ENCODE measurements at regions of chr13 and their contacts with region 1.

Region 1: GRCh38 chr13:25114220-25114619 is 18.3 kb downstream of the PABPC3 start:
- DNase-seq: peak; percentile 77
- H3K4me3 Mint-ChIP-seq: no peak overlapping the region
- H3K27ac Mint-ChIP-seq: no peak overlapping the region
- H3K4me1 Mint-ChIP-seq: peaks cover 6% of the 10 kb centered on the region
- H3K27me3 Mint-ChIP-seq: no peaks in the 10 kb centered on the region
- CTCF ChIP-seq: peak; percentile 71

Region 2: GRCh38 chr13:25001476-25002206 is 112.6 kb before region 1 on chr13:
- CTCF ChIA-PET with region 1: interaction called, 42 read pairs
- POLR2A ChIA-PET with region 1: no interaction called
- intact Hi-C with region 1: loop called (anchors 1 kb)
- DNase-seq: peak; percentile 53
- H3K4me3 Mint-ChIP-seq: no peak overlapping the region
- H3K27ac Mint-ChIP-seq: peak overlapping the region; percentile 66
- H3K4me1 Mint-ChIP-seq: peaks cover 19% of the 10 kb centered on the region
- H3K27me3 Mint-ChIP-seq: no peaks in the 10 kb centered on the region
- CTCF ChIP-seq: no peak

Region 3: DNA sequence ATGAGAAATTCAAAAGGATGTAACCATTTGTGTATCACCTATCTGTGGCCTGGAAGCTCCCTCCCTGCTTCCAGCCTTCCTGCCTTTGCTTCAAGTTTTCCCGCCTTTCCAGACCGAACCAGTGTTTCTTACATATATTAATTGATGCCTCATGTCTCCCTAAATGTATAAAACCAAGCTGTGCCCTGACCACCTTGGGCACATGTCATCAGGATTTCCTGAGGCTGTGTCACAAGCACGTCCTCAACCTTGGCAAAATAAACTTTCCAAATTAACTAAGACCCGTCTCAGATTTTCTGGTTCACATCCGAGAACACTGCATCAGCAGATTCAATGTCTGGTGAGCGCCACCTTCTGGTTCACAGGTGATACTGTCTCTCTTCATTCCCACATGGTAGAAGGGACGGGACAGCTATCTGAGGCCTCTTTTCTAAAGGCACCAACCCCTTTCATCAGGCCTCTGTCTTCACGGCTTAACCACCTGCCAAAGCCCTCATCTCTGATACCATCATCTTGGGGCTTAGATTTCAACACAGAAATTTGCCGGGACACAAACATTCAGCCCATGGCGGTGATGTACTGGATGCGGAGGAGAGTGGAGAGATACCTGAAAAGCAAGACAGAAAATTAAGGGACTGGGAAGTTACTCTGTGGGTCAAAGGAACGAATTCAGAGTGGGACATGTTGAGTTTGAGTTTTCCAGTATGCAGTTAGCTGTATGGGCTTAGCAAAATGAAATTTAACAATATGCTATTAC is 77.0 kb before region 1 on chr13:
- CTCF ChIA-PET with region 1: interaction called, 9 read pairs
- POLR2A ChIA-PET with region 1: no interaction called
- intact Hi-C with region 1: loop called (anchors 1 kb)
- DNase-seq: peak; percentile 79
- H3K4me3 Mint-ChIP-seq: no peak overlapping the region
- H3K27ac Mint-ChIP-seq: peak overlapping the region; percentile 16
- H3K4me1 Mint-ChIP-seq: peaks cover 5% of the 10 kb centered on the region
- H3K27me3 Mint-ChIP-seq: peaks cover 32% of the 10 kb centered on the region
- CTCF ChIP-seq: peak; percentile 72

Region 4: GRCh38 chr13:25085125-25085742 is 29.0 kb before region 1 on chr13:
- CTCF ChIA-PET with region 1: interaction called, 44 read pairs
- POLR2A ChIA-PET with region 1: no interaction called
- intact Hi-C with region 1: loop called (anchors 1 kb)
- DNase-seq: peak; percentile 66
- H3K4me3 Mint-ChIP-seq: no peak overlapping the region
- H3K27ac Mint-ChIP-seq: no peak overlapping the region
- H3K4me1 Mint-ChIP-seq: no peaks in the 10 kb centered on the region
- H3K27me3 Mint-ChIP-seq: no peaks in the 10 kb centered on the region
- CTCF ChIP-seq: peak; percentile 52

Region 5: GRCh38 chr13:25103711-25104110 is 10.5 kb before region 1 on chr13:
- CTCF ChIA-PET with region 1: interaction called, 11 read pairs
- POLR2A ChIA-PET with region 1: interaction called, 4 read pairs
- intact Hi-C with region 1: no loop called
- DNase-seq: no peak
- H3K4me3 Mint-ChIP-seq: no peak overlapping the region
- H3K27ac Mint-ChIP-seq: no peak overlapping the region
- H3K4me1 Mint-ChIP-seq: no peaks in the 10 kb centered on the region
- H3K27me3 Mint-ChIP-seq: no peaks in the 10 kb centered on the region
- CTCF ChIP-seq: no peak

Measured in MCF 10A (cell line).